ENCODE measurements at regions of chr17 and their contacts with region 1.

Region 1: GRCh38 chr17:66633317-66633965 is 201.5 kb upstream of the CACNG5 start:
- DNase-seq: peak; percentile 73
- ATAC-seq: peak; percentile 98
- H3K4me3 Mint-ChIP-seq: no peak overlapping the region
- H3K27ac Mint-ChIP-seq: peak overlapping the region; percentile 78
- H3K4me1 Mint-ChIP-seq: peaks cover 66% of the 10 kb centered on the region
- H3K27me3 Mint-ChIP-seq: no peaks in the 10 kb centered on the region

Region 2: GRCh38 chr17:66508896-66509843 is 124.3 kb before region 1 on chr17:
- CTCF ChIA-PET with region 1: no interaction called
- POLR2A ChIA-PET with region 1: no interaction called
- intact Hi-C with region 1: loop called in 1 of 2 experiments (anchors 1 kb)
- DNase-seq: peak; percentile 80
- ATAC-seq: peak; percentile 68
- H3K4me3 Mint-ChIP-seq: peak overlapping the region; percentile 49
- H3K27ac Mint-ChIP-seq: peak overlapping the region; percentile 93
- H3K4me1 Mint-ChIP-seq: peaks cover 72% of the 10 kb centered on the region
- H3K27me3 Mint-ChIP-seq: no peaks in the 10 kb centered on the region

Region 3: DNA sequence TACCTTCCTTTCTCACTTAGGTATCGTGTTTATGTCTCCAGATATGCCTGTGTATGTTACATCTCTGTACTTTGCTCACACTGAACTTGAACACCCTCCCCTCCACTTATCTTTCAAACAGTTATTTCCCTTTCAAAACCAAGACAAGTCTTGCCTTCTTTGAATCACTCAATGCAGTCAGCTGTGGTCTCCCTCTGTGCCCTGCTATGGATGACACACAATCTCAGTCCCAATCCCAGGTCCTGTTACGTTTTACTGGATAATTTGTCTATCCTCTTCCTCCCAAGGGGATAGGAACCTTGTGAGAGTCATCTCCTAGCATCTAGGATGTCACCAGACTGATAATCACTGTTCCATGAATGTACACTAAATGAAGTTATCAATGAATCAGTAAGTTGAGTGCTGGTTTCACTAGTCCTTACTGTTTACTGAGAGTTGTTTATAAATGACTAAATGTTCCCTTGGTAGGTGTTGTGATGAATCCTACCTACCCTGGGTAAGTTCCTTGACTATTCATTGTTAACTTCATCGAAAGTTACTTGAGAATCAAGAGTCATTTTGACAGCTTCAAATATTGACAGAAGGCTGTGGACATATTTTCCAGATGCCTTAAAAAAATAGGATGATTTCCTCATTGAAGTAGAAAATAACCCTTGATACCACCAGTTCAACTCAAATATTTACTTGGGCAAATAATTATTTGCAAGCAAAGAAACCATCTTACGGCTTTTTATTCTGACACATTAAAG is 86.2 kb before region 1 on chr17:
- CTCF ChIA-PET with region 1: interaction called, 4 read pairs
- POLR2A ChIA-PET with region 1: interaction called, 10 read pairs
- intact Hi-C with region 1: no loop called
- DNase-seq: no peak
- ATAC-seq: peak; percentile 80
- H3K4me3 Mint-ChIP-seq: no peak overlapping the region
- H3K27ac Mint-ChIP-seq: peak overlapping the region; percentile 81
- H3K4me1 Mint-ChIP-seq: peaks cover 63% of the 10 kb centered on the region
- H3K27me3 Mint-ChIP-seq: no peaks in the 10 kb centered on the region

Region 4: DNA sequence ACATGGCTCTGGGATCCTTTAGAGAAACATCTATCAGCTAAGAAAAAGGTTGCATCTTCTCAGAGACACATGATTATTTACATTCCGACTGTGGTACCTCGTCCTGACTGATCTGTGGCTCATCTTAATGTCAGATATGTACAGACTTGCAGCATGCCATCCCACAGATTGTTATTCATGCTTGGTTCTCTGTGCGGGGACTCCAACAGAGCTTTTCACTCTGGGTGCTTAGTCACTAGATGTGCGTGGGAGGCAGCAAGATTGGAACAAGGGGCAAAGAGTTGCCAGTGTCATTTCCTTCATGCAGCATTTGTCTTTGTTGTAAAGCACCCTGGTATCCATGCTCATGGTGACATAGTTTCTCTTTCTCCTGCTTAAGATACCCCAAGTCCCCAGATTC is 22.4 kb after region 1 on chr17:
- CTCF ChIA-PET with region 1: interaction called, 4 read pairs
- POLR2A ChIA-PET with region 1: no interaction called
- intact Hi-C with region 1: loop called (anchors 1 to 2 kb)
- DNase-seq: peak; percentile 86
- ATAC-seq: peak; percentile 91
- H3K4me3 Mint-ChIP-seq: no peak overlapping the region
- H3K27ac Mint-ChIP-seq: peak overlapping the region; percentile 73
- H3K4me1 Mint-ChIP-seq: peaks cover 47% of the 10 kb centered on the region
- H3K27me3 Mint-ChIP-seq: no peaks in the 10 kb centered on the region

Region 5: GRCh38 chr17:66667491-66668030 is 34.1 kb after region 1 on chr17:
- CTCF ChIA-PET with region 1: no interaction called
- POLR2A ChIA-PET with region 1: no interaction called
- intact Hi-C with region 1: loop called (anchors 1 to 2 kb)
- DNase-seq: peak; percentile 84
- ATAC-seq: peak; percentile 81
- H3K4me3 Mint-ChIP-seq: peak overlapping the region; percentile 1
- H3K27ac Mint-ChIP-seq: peak overlapping the region; percentile 76
- H3K4me1 Mint-ChIP-seq: peaks cover 81% of the 10 kb centered on the region
- H3K27me3 Mint-ChIP-seq: no peaks in the 10 kb centered on the region

Region 6: GRCh38 chr17:66673668-66674315 is 40.4 kb after region 1 on chr17:
- CTCF ChIA-PET with region 1: interaction called, 4 read pairs
- POLR2A ChIA-PET with region 1: no interaction called
- intact Hi-C with region 1: loop called in 1 of 2 experiments (anchors 1 kb)
- DNase-seq: peak; percentile 63
- ATAC-seq: peak; percentile 80
- H3K4me3 Mint-ChIP-seq: peak overlapping the region; percentile 6
- H3K27ac Mint-ChIP-seq: peak overlapping the region; percentile 84
- H3K4me1 Mint-ChIP-seq: peaks cover 61% of the 10 kb centered on the region
- H3K27me3 Mint-ChIP-seq: no peaks in the 10 kb centered on the region

Measured in activated CD4-positive, alpha-beta T cell treated with anti-CD3 and anti-CD28 coated beads for 36 hours (primary cell).